ENCODE measurements at regions of chr6 and their contacts with region 1.

Region 1: DNA sequence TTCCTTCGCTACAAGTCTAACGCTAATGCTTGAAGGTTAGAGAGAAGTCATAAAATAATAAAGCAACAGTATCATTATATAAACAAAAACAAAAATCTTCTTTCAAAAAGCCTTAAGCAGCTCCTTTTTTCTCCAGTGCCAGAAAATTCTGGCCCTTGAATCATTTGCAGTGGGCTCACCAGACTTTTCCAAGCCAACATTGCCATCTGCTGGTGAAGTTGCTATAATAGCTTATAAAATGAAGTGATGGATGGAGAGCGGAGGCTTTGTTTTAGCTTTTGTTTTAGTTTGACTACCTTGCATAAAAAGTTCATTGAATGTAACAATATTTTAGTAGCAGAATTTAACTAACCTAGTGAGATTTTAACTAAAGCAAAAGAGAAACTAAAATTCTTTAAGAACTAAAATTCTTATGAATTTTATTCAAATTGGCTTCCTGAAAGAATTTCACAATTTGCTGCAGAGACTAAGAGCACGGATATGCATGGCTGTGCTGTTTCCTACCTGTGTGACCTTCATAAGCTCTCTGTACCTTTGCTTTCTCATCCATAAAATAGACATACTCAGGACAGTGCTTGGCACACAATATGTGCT is 44.8 kb upstream of the SLC2A12 start:
- DNase-seq: peak; percentile 50
- H3K4me3 ChIP-seq: no peak overlapping the region
- H3K27ac ChIP-seq: no peak overlapping the region
- H3K27me3 ChIP-seq: no peaks in the 10 kb centered on the region
- CTCF ChIP-seq: peak; percentile 64

Region 2: GRCh38 chr6:133923938-133924593 is 173.1 kb before region 1 on chr6:
- CTCF ChIA-PET with region 1: interaction called, 744 read pairs
- POLR2A ChIA-PET with region 1: interaction called, 7 read pairs
- DNase-seq: peak; percentile 59
- H3K4me3 ChIP-seq: no peak overlapping the region
- H3K27ac ChIP-seq: no peak overlapping the region
- H3K27me3 ChIP-seq: no peaks in the 10 kb centered on the region
- CTCF ChIP-seq: peak; percentile 88

Region 3: GRCh38 chr6:133945158-133945557 is 152.1 kb before region 1 on chr6:
- CTCF ChIA-PET with region 1: interaction called, 14 read pairs
- POLR2A ChIA-PET with region 1: no interaction called
- DNase-seq: no peak
- H3K4me3 ChIP-seq: no peak overlapping the region
- H3K27ac ChIP-seq: no peak overlapping the region
- H3K27me3 ChIP-seq: no peaks in the 10 kb centered on the region
- CTCF ChIP-seq: no peak

Region 4: GRCh38 chr6:133959667-133960368 is 137.4 kb before region 1 on chr6:
- CTCF ChIA-PET with region 1: interaction called, 37 read pairs
- POLR2A ChIA-PET with region 1: no interaction called
- DNase-seq: no peak
- H3K4me3 ChIP-seq: no peak overlapping the region
- H3K27ac ChIP-seq: no peak overlapping the region
- H3K27me3 ChIP-seq: no peaks in the 10 kb centered on the region
- CTCF ChIP-seq: no peak

Region 5: GRCh38 chr6:134080171-134080795 is 16.9 kb before region 1 on chr6:
- CTCF ChIA-PET with region 1: interaction called, 25 read pairs
- POLR2A ChIA-PET with region 1: no interaction called
- DNase-seq: no peak
- H3K4me3 ChIP-seq: no peak overlapping the region
- H3K27ac ChIP-seq: no peak overlapping the region
- H3K27me3 ChIP-seq: peaks cover 6% of the 10 kb centered on the region
- CTCF ChIP-seq: no peak

Region 6: DNA sequence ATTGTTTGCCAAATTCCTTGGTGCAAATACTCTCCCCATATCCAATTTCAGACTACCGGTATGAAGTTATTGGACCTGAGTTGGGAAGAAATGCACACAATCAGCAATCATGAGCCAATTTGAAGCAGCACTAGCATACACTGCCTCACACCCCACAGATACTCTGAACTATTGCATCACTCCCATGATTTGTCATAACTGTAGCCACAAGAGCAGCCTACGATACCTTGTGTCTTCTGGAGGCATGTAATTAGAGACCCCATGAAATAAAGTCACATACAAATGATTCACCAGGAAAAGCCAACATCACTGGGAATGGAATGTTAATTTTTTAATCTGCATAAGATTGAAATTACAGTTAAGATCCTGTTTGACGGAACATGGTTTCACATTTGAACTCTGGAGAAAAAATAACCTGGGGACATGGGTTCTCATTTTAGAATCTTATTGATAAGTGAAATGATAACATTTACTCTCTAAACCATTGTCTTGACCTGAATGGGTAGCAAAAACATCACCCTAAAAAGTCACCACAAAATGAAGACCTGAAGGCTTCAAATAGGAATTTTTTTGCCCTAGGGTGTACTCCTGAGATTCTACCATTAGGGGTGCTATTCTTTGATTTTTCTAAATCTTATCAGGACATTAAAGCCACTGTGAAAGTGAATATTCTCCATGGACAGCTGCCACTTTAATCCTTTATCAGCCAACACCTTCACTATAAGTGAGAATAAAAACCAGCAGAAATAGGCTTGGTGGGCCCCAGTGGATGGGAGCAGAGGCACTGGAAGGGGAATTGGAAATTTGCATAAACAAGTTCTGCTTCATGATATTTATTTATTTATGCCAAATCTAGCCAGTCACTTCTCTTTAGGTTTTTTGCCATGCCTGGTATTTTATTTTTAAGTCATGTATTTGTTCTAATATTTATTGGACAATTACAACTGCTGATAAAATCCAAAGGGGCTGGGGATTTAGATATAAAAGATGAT is 991.9 kb after region 1 on chr6:
- CTCF ChIA-PET with region 1: no interaction called
- POLR2A ChIA-PET with region 1: no interaction called
- DNase-seq: peak; percentile 3
- H3K4me3 ChIP-seq: no peak overlapping the region
- H3K27ac ChIP-seq: no peak overlapping the region
- H3K27me3 ChIP-seq: peaks cover 16% of the 10 kb centered on the region
- CTCF ChIP-seq: peak; percentile 56

Measured in AG04450 (cell line).